Natural killer cell (primary cell): ENCODE measurements at regions of chr18 and their contacts with region 1.

Region 1: GRCh38 chr18:77000527-77000926 is 132.1 kb downstream of the MBP start:
- DNase-seq: peak; percentile 59 to 78
- ATAC-seq: peak in 2 of 3 donors; percentile 64 to 76
- H3K4me3 ChIP-seq: no peak overlapping the region
- H3K4me3 Mint-ChIP-seq: no peak overlapping the region
- H3K27ac ChIP-seq: no peak overlapping the region
- H3K27ac Mint-ChIP-seq: peak overlapping the region; percentile 29 to 46
- H3K4me1 ChIP-seq: peaks cover 29% of the 10 kb centered on the region
- H3K4me1 Mint-ChIP-seq: peaks cover 31 to 39% of the 10 kb centered on the region in 2 donors
- H3K27me3 ChIP-seq: no peaks in the 10 kb centered on the region
- H3K27me3 Mint-ChIP-seq: peaks cover 0 to 2% of the 10 kb centered on the region in 2 donors
- CTCF ChIP-seq: peak; percentile 99

Region 2: GRCh38 chr18:76791106-76791505 is 209.4 kb before region 1 on chr18:
- intact Hi-C with region 1: no loop called
- DNase-seq: no peak
- ATAC-seq: no peak
- H3K4me3 ChIP-seq: no peak overlapping the region
- H3K4me3 Mint-ChIP-seq: no peak overlapping the region
- H3K27ac ChIP-seq: no peak overlapping the region
- H3K27ac Mint-ChIP-seq: no peak overlapping the region
- H3K4me1 ChIP-seq: peaks cover 11% of the 10 kb centered on the region
- H3K4me1 Mint-ChIP-seq: peaks cover 14 to 19% of the 10 kb centered on the region in 2 donors
- H3K27me3 ChIP-seq: no peaks in the 10 kb centered on the region
- H3K27me3 Mint-ChIP-seq: peaks cover 16 to 22% of the 10 kb centered on the region in 2 donors
- CTCF ChIP-seq: no peak

Region 3: GRCh38 chr18:76903386-76903785 is 97.1 kb before region 1 on chr18:
- intact Hi-C with region 1: no loop called
- DNase-seq: no peak
- ATAC-seq: no peak
- H3K4me3 ChIP-seq: no peak overlapping the region
- H3K4me3 Mint-ChIP-seq: no peak overlapping the region
- H3K27ac ChIP-seq: no peak overlapping the region
- H3K27ac Mint-ChIP-seq: no peak overlapping the region
- H3K4me1 ChIP-seq: no peaks in the 10 kb centered on the region
- H3K4me1 Mint-ChIP-seq: peaks cover 0 to 6% of the 10 kb centered on the region in 2 donors
- H3K27me3 ChIP-seq: no peaks in the 10 kb centered on the region
- H3K27me3 Mint-ChIP-seq: no peaks in the 10 kb centered on the region
- CTCF ChIP-seq: no peak

Region 4: GRCh38 chr18:77054606-77055428 is 54.3 kb after region 1 on chr18:
- intact Hi-C with region 1: loop called (anchors 1 kb)
- DNase-seq: peak; percentile 66 to 93
- ATAC-seq: peak; percentile 70 to 90 (median 84)
- H3K4me3 ChIP-seq: peak overlapping the region; percentile 3
- H3K4me3 Mint-ChIP-seq: peak overlapping the region; percentile 79
- H3K27ac ChIP-seq: peak overlapping the region; percentile 92
- H3K27ac Mint-ChIP-seq: peak overlapping the region; percentile 87 to 98
- H3K4me1 ChIP-seq: peaks cover 81% of the 10 kb centered on the region
- H3K4me1 Mint-ChIP-seq: peaks cover 73 to 77% of the 10 kb centered on the region in 2 donors
- H3K27me3 ChIP-seq: no peaks in the 10 kb centered on the region
- H3K27me3 Mint-ChIP-seq: no peaks in the 10 kb centered on the region
- CTCF ChIP-seq: peak; percentile 60

Region 5: DNA sequence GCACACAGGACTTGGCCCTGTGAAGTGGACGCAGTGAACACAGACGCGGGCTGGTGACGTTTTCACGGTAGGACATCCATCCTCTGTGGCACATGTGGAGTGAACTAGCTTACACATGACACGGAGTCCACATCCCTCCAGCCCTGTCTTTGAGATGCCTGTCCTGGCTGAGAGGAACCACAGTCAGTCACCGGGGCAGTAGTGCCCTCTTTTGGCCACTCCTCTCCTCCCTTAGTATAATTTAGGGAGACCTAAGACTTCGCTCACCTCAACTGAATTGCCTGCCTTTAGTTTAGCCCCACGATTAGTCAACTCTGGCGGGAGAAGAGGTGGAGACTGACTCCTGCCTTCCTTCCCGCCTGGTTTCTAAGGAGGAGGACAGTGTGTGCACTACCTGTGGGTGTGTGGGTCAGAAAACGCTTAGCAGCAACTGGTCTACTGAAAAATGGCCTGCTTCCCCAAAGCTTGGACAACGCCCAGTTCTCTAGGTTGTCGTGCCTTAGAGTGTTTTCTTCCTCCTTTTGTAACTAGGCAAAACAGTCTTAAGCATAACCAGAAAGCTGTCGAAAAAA is 61.5 kb after region 1 on chr18:
- intact Hi-C with region 1: loop called (anchors 2 kb)
- DNase-seq: peak in 1 of 2 donors; percentile 47
- ATAC-seq: peak; percentile 25 to 57 (median 47)
- H3K4me3 ChIP-seq: no peak overlapping the region
- H3K4me3 Mint-ChIP-seq: peak overlapping the region; percentile 81
- H3K27ac ChIP-seq: peak overlapping the region; percentile 93
- H3K27ac Mint-ChIP-seq: peak overlapping the region; percentile 94 to 98
- H3K4me1 ChIP-seq: peaks cover 90% of the 10 kb centered on the region
- H3K4me1 Mint-ChIP-seq: peaks cover 86 to 88% of the 10 kb centered on the region in 2 donors
- H3K27me3 ChIP-seq: no peaks in the 10 kb centered on the region
- H3K27me3 Mint-ChIP-seq: no peaks in the 10 kb centered on the region
- CTCF ChIP-seq: no peak

Region 6: DNA sequence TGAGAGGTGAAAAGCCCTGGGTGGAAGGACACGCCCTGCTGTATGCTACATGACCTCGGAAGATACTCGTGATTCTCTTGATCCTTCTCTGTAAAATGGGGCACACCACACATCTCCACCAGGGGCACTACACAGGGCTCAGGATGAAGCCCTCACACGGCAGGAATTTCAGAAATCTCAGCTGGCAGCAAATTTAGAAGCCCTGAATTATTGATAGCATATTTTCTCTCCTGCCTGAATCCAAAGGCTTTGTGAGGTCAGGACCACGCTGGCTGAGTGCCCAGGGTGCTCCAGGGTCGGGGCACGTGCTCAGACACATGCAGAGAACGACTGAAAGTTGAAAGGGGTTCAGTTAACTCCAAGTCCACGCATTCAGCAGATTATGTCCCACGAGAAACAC is 207.0 kb after region 1 on chr18:
- intact Hi-C with region 1: loop called (anchors 2 kb)
- DNase-seq: peak in 1 of 2 donors; percentile 82
- ATAC-seq: peak; percentile 61 to 74 (median 74)
- H3K4me3 ChIP-seq: no peak overlapping the region
- H3K4me3 Mint-ChIP-seq: no peak overlapping the region
- H3K27ac ChIP-seq: no peak overlapping the region
- H3K27ac Mint-ChIP-seq: peak overlapping the region; percentile 47 to 96
- H3K4me1 ChIP-seq: peaks cover 41% of the 10 kb centered on the region
- H3K4me1 Mint-ChIP-seq: peaks cover 45 to 47% of the 10 kb centered on the region in 2 donors
- H3K27me3 ChIP-seq: no peaks in the 10 kb centered on the region
- H3K27me3 Mint-ChIP-seq: no peaks in the 10 kb centered on the region
- CTCF ChIP-seq: peak; percentile 49